Naive thymus-derived CD4-positive, alpha-beta T cell (primary cell): ENCODE measurements at regions of chr9 and their contacts with region 1.

Region 1: GRCh38 chr9:20622330-20623020 is at the start of gene MLLT3:
- DNase-seq: peak; percentile 91 to 98 (median 98)
- ATAC-seq: peak; percentile 88
- H3K4me3 ChIP-seq: peak within 1 kb of the TSS; percentile 84
- H3K4me3 Mint-ChIP-seq: peak within 1 kb of the TSS; percentile 92 to 100 (median 98)
- H3K27ac ChIP-seq: peak within 1 kb of the TSS; percentile 89
- H3K27ac Mint-ChIP-seq: peak within 1 kb of the TSS; percentile 89 to 100 (median 99)
- H3K4me1 ChIP-seq: peaks cover 21 to 40% of the 10 kb centered on the region in 2 donors
- H3K4me1 Mint-ChIP-seq: peaks cover 30 to 48% (median 45%) of the 10 kb centered on the region in 7 donors
- H3K27me3 ChIP-seq: no peaks in the 10 kb centered on the region
- H3K27me3 Mint-ChIP-seq: no peaks in the 10 kb centered on the region
- total RNA-seq, gene MLLT3: 40.9 to 85.3 (median 71.3) TPM

Region 2: GRCh38 chr9:19471737-19472648 is 1150.5 kb before region 1 on chr9:
- CTCF ChIA-PET with region 1: no interaction called
- POLR2A ChIA-PET with region 1: no interaction called
- intact Hi-C with region 1: loop called in 1 of 2 experiments (anchors 10 kb)
- DNase-seq: peak in 7 of 9 donors; percentile 11 to 56 (median 33)
- ATAC-seq: peak; percentile 60
- H3K4me3 ChIP-seq: peak overlapping the region; percentile 39
- H3K4me3 Mint-ChIP-seq: peak overlapping the region; percentile 48 to 85 (median 75)
- H3K27ac ChIP-seq: no peak overlapping the region
- H3K27ac Mint-ChIP-seq: peak overlapping the region in 2 of 9 donors; percentile 36 to 65
- H3K4me1 ChIP-seq: no peaks in the 10 kb centered on the region
- H3K4me1 Mint-ChIP-seq: peaks cover 0 to 13% (median 4%) of the 10 kb centered on the region in 7 donors
- H3K27me3 ChIP-seq: no peaks in the 10 kb centered on the region
- H3K27me3 Mint-ChIP-seq: peaks cover 0 to 15% (median 0%) of the 10 kb centered on the region in 5 donors

Region 3: GRCh38 chr9:20209391-20210340 is 412.8 kb before region 1 on chr9:
- CTCF ChIA-PET with region 1: no interaction called
- POLR2A ChIA-PET with region 1: no interaction called
- intact Hi-C with region 1: loop called in 1 of 2 experiments (anchors 1 kb)
- DNase-seq: peak in 8 of 9 donors; percentile 49 to 78 (median 71)
- ATAC-seq: peak; percentile 86
- H3K4me3 ChIP-seq: no peak overlapping the region
- H3K4me3 Mint-ChIP-seq: peak overlapping the region; percentile 58 to 92 (median 70)
- H3K27ac ChIP-seq: no peak overlapping the region
- H3K27ac Mint-ChIP-seq: peak overlapping the region; percentile 65 to 94 (median 85)
- H3K4me1 ChIP-seq: peaks cover 17 to 30% of the 10 kb centered on the region in 2 donors
- H3K4me1 Mint-ChIP-seq: peaks cover 31 to 46% (median 41%) of the 10 kb centered on the region in 7 donors
- H3K27me3 ChIP-seq: no peaks in the 10 kb centered on the region
- H3K27me3 Mint-ChIP-seq: no peaks in the 10 kb centered on the region

Region 4: GRCh38 chr9:20361656-20362570 is 260.6 kb before region 1 on chr9:
- CTCF ChIA-PET with region 1: interaction called, 9 read pairs
- POLR2A ChIA-PET with region 1: interaction called, 8 read pairs
- intact Hi-C with region 1: loop called in 1 of 2 experiments (anchors 1 kb)
- DNase-seq: peak in 2 of 9 donors; percentile 18 to 23
- ATAC-seq: peak; percentile 58
- H3K4me3 ChIP-seq: no peak overlapping the region
- H3K4me3 Mint-ChIP-seq: peak overlapping the region; percentile 11 to 76 (median 67)
- H3K27ac ChIP-seq: peak overlapping the region; percentile 45
- H3K27ac Mint-ChIP-seq: peak overlapping the region; percentile 65 to 94 (median 86)
- H3K4me1 ChIP-seq: peaks cover 0 to 31% of the 10 kb centered on the region in 2 donors
- H3K4me1 Mint-ChIP-seq: peaks cover 28 to 91% (median 65%) of the 10 kb centered on the region in 7 donors
- H3K27me3 ChIP-seq: no peaks in the 10 kb centered on the region
- H3K27me3 Mint-ChIP-seq: no peaks in the 10 kb centered on the region

Region 5: GRCh38 chr9:20490246-20490834 is 132.1 kb before region 1 on chr9:
- CTCF ChIA-PET with region 1: no interaction called
- POLR2A ChIA-PET with region 1: no interaction called
- intact Hi-C with region 1: no loop called
- DNase-seq: no peak
- ATAC-seq: no peak
- H3K4me3 ChIP-seq: no peak overlapping the region
- H3K4me3 Mint-ChIP-seq: peak overlapping the region in 4 of 10 donors; percentile 23 to 35 (median 30)
- H3K27ac ChIP-seq: no peak overlapping the region
- H3K27ac Mint-ChIP-seq: peak overlapping the region in 1 of 9 donors; percentile 48
- H3K4me1 ChIP-seq: peaks cover 0 to 24% of the 10 kb centered on the region in 2 donors
- H3K4me1 Mint-ChIP-seq: peaks cover 20 to 85% (median 70%) of the 10 kb centered on the region in 7 donors
- H3K27me3 ChIP-seq: no peaks in the 10 kb centered on the region
- H3K27me3 Mint-ChIP-seq: no peaks in the 10 kb centered on the region

Region 6: GRCh38 chr9:20611751-20612287 is 10.7 kb before region 1 on chr9:
- CTCF ChIA-PET with region 1: no interaction called
- POLR2A ChIA-PET with region 1: interaction called, 7 read pairs
- intact Hi-C with region 1: loop called (anchors 1 kb)
- DNase-seq: peak in 1 of 9 donors; percentile 25
- ATAC-seq: peak; percentile 48
- H3K4me3 ChIP-seq: no peak overlapping the region
- H3K4me3 Mint-ChIP-seq: peak overlapping the region in 7 of 10 donors; percentile 2 to 50 (median 33)
- H3K27ac ChIP-seq: no peak overlapping the region
- H3K27ac Mint-ChIP-seq: peak overlapping the region in 6 of 9 donors; percentile 9 to 80 (median 34)
- H3K4me1 ChIP-seq: peaks cover 0 to 32% of the 10 kb centered on the region in 2 donors
- H3K4me1 Mint-ChIP-seq: peaks cover 36 to 96% (median 89%) of the 10 kb centered on the region in 7 donors
- H3K27me3 ChIP-seq: no peaks in the 10 kb centered on the region
- H3K27me3 Mint-ChIP-seq: no peaks in the 10 kb centered on the region

Region 7: DNA sequence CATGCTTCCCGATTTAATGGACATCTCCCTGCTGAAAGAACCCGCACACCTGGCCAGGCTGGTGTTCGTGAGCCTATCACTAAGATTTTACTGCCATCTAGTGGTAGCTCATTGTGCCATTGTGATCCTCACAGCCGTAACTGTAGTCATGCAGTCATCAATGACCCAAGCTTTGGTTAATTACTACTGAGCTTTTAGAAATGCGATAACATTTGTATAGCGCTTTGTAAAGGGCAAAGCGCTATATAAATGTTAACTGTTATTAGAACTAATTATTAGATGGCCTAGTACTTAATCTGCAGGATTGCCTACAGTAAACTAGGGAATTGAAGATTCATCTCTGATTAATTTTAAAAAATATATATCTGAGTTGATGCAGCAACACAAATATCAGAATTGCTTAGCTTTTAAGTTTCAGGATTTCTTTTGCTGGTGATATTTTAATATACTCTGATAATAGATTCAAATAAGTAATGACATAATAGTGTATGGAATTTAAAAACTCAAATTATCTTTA is 318.8 kb after region 1 on chr9:
- CTCF ChIA-PET with region 1: interaction called, 13 read pairs
- POLR2A ChIA-PET with region 1: interaction called, 4 read pairs
- intact Hi-C with region 1: loop called (anchors 1 kb)
- DNase-seq: peak; percentile 13 to 73 (median 62)
- ATAC-seq: peak; percentile 95
- H3K4me3 ChIP-seq: no peak overlapping the region
- H3K4me3 Mint-ChIP-seq: peak overlapping the region in 1 of 10 donors; percentile 20
- H3K27ac ChIP-seq: no peak overlapping the region
- H3K27ac Mint-ChIP-seq: peak overlapping the region in 3 of 9 donors; percentile 13 to 29 (median 29)
- H3K4me1 ChIP-seq: no peaks in the 10 kb centered on the region
- H3K4me1 Mint-ChIP-seq: peaks cover 0 to 8% (median 5%) of the 10 kb centered on the region in 7 donors
- H3K27me3 ChIP-seq: no peaks in the 10 kb centered on the region
- H3K27me3 Mint-ChIP-seq: no peaks in the 10 kb centered on the region

Region 8: GRCh38 chr9:21119093-21119770 is 496.8 kb after region 1 on chr9:
- CTCF ChIA-PET with region 1: no interaction called
- POLR2A ChIA-PET with region 1: no interaction called
- intact Hi-C with region 1: no loop called
- DNase-seq: no peak
- ATAC-seq: peak; percentile 79
- H3K4me3 ChIP-seq: no peak overlapping the region
- H3K4me3 Mint-ChIP-seq: no peak overlapping the region
- H3K27ac ChIP-seq: no peak overlapping the region
- H3K27ac Mint-ChIP-seq: no peak overlapping the region
- H3K4me1 ChIP-seq: no peaks in the 10 kb centered on the region
- H3K4me1 Mint-ChIP-seq: peaks cover 0 to 4% (median 0%) of the 10 kb centered on the region in 7 donors
- H3K27me3 ChIP-seq: no peaks in the 10 kb centered on the region
- H3K27me3 Mint-ChIP-seq: peaks cover 3 to 49% (median 12%) of the 10 kb centered on the region in 5 donors